PC-3 (cell line): ENCODE measurements at regions of chr5 and their contacts with region 1.

Region 1: DNA sequence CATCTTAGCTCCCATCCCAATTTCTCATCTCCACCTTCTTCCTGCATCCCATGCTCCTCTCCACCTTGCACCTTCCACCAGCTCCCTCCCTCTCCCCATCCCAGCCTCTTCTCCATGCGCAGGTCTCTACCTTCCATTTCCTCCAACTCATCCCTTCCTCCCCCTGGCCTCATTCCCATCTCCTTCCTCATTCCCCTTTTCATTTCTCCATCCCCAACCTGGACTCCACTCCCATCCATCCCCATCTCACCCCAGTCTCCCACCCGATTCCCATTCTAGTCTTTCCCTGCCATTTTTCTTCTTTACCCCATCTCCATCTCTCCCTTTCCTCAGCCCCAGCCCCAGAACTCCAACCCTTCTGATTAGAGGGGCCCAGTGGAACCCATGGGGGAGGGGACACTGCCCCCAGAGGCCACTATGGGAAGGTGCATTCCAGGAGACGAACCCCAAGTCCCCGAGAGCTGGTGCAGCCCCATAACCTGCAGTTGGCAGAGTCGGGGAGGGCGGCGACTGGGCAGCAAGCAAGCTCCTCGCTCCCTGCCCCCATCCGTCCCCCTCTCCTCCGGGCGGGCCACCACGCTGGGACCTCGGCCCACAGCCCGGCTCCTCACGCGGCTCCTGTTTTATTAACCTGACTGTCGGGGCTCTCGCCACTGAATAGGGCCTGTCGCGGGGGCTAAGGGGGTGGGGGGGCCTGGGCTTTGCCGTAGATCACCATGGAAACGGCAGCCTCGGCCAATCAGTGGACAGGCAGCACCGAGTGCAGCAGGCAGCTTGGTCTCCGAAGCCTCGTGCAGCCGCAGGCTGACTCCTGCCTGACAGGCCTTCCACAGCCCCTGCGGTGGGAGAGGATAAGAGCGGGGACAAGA is 66.7 kb downstream of the PCDH1 start:
- DNase-seq: no peak
- ATAC-seq: no peak
- H3K4me3 ChIP-seq: no peak overlapping the region
- H3K27ac ChIP-seq: no peak overlapping the region
- H3K4me1 ChIP-seq: no peaks in the 10 kb centered on the region
- H3K27me3 ChIP-seq: no peaks in the 10 kb centered on the region
- CTCF ChIP-seq: peak; percentile 60

Region 2: GRCh38 chr5:141757402-141757801 is 54.1 kb before region 1 on chr5:
- CTCF ChIA-PET with region 1: interaction called, 10 read pairs
- POLR2A ChIA-PET with region 1: no interaction called
- intact Hi-C with region 1: no loop called
- DNase-seq: peak; percentile 67
- ATAC-seq: peak; percentile 81
- H3K4me3 ChIP-seq: no peak overlapping the region
- H3K27ac ChIP-seq: no peak overlapping the region
- H3K4me1 ChIP-seq: peaks cover 6% of the 10 kb centered on the region; the same call in 1 of the 2 replicates
- H3K27me3 ChIP-seq: peaks cover 6% of the 10 kb centered on the region; the same call in 1 of the 2 replicates
- CTCF ChIP-seq: peak; percentile 58

Region 3: GRCh38 chr5:142654578-142655058 is 843.1 kb after region 1 on chr5:
- CTCF ChIA-PET with region 1: no interaction called
- POLR2A ChIA-PET with region 1: no interaction called
- intact Hi-C with region 1: no loop called
- DNase-seq: peak; percentile 7
- ATAC-seq: peak; percentile 37; the same call in 1 of the 2 replicates
- H3K4me3 ChIP-seq: no peak overlapping the region
- H3K27ac ChIP-seq: no peak overlapping the region
- H3K4me1 ChIP-seq: 0 out of 2 replicates have a peak, but pooled peaks cover 4% of the 10 kb centered on the region
- H3K27me3 ChIP-seq: no peaks in the 10 kb centered on the region
- CTCF ChIP-seq: peak; percentile 23; the same call in 1 of the 2 replicates